Dendritic cell treated with granulocyte-macrophage colony-stimulating factor and Interleukin-4, amounts not matched to agents 40 ng/mL and 50 ng/mL, for 4 days (primary cell): ENCODE measurements at regions of chr3 and their contacts with region 1.

Region 1: GRCh38 chr3:124878561-124879336 is 8.4 kb downstream of the ITGB5 start:
- H3K4me3 Mint-ChIP-seq: peak overlapping the region; percentile 5
- H3K27ac Mint-ChIP-seq: peak overlapping the region; percentile 65
- H3K4me1 Mint-ChIP-seq: peaks cover 46% of the 10 kb centered on the region
- H3K27me3 Mint-ChIP-seq: peaks cover 11% of the 10 kb centered on the region

Region 2: GRCh38 chr3:124826703-124827102 is 52.0 kb before region 1 on chr3:
- intact Hi-C with region 1: loop called (anchors 5 kb)
- H3K4me3 Mint-ChIP-seq: no peak overlapping the region
- H3K27ac Mint-ChIP-seq: peak overlapping the region; percentile 72
- H3K4me1 Mint-ChIP-seq: peaks cover 62% of the 10 kb centered on the region
- H3K27me3 Mint-ChIP-seq: no peaks in the 10 kb centered on the region

Region 3: DNA sequence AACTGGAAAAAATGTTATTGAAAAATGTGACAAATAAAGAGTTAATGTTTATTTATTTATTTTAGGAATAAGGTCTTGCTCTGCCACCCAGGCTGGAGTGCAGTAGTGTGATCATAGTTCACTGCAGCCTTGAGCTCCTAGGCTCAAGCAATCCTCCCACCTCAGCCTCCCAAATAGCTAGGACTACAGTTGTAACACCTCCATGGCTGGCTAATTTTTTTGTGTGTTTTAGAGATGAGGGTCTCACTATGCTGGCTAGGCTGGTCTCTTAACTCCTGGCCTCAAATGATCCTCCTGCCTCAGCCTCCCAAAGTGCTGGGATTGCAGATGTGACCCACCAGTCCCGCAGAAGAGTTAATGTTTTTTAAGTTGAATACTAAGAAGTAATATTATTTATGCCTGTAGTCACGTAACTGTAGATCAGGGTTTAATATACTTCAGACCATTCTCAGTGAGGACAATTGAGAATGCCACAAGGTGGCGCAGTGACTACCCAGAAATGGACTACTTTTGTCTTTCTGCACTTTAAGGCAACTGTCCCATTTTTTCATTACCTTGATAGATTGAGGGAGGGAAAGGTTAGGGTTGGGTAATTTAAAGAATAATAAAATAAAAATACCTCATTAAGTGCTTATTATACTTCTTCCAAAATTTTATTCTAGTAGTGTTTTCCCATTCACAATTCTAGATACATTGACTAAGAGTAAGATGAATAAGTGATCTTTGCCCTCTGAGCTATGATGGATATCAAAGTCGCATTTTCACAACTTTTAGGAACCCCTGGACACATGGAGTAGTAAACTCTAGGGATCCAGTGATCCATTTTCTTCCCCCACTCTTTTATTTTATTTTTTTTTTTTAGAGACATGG is 49.8 kb after region 1 on chr3:
- intact Hi-C with region 1: no loop called
- H3K4me3 Mint-ChIP-seq: no peak overlapping the region
- H3K27ac Mint-ChIP-seq: peak overlapping the region; percentile 63
- H3K4me1 Mint-ChIP-seq: peaks cover 31% of the 10 kb centered on the region
- H3K27me3 Mint-ChIP-seq: peaks cover 6% of the 10 kb centered on the region